ENCODE measurements at regions of chr16 and their contacts with region 1.

Region 1: GRCh38 chr16:85258629-85259028 is 146.4 kb upstream of the CIBAR2 start:
- DNase-seq: no peak
- H3K4me3 Mint-ChIP-seq: no peak overlapping the region
- H3K27ac Mint-ChIP-seq: no peak overlapping the region
- H3K4me1 Mint-ChIP-seq: no peaks in the 10 kb centered on the region
- H3K27me3 Mint-ChIP-seq: no peaks in the 10 kb centered on the region
- CTCF ChIP-seq: no peak

Region 2: GRCh38 chr16:85245307-85246172 is 13.1 kb before region 1 on chr16:
- CTCF ChIA-PET with region 1: interaction called, 15 read pairs
- POLR2A ChIA-PET with region 1: no interaction called
- intact Hi-C with region 1: no loop called
- DNase-seq: peak; percentile 62
- H3K4me3 Mint-ChIP-seq: no peak overlapping the region
- H3K27ac Mint-ChIP-seq: no peak overlapping the region
- H3K4me1 Mint-ChIP-seq: peaks cover 11% of the 10 kb centered on the region
- H3K27me3 Mint-ChIP-seq: peaks cover 12% of the 10 kb centered on the region
- CTCF ChIP-seq: peak; percentile 71

Region 3: DNA sequence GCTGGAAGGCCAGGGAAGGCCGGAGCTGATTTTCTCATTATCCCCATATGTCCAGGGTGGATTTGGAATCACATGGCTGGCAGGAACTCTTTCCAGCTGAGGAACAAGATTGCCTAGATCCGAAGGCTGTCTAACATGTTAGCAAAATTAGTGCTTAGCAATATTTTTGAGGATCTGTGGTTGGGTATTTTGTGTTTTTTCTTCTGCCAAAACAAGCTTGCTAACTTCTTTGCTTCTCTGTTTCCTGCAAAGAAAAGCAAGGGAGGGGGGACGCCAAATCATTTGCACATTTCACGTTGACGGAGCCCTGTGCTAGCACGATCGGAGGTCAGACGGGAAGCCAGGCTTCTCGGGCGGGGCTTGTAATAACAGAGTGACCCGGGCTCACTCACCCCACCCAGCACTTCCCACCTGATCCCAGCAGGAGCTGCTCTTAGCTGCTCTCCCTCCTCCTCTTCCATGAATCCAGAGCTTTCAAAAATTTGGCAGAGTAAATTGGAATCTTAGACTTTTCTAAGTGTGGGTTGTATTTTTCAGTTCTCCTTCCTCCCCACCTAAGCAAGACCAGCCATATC is 1218.4 kb after region 1 on chr16:
- CTCF ChIA-PET with region 1: no interaction called
- POLR2A ChIA-PET with region 1: no interaction called
- intact Hi-C with region 1: no loop called
- DNase-seq: no peak
- H3K4me3 Mint-ChIP-seq: no peak overlapping the region
- H3K27ac Mint-ChIP-seq: no peak overlapping the region
- H3K4me1 Mint-ChIP-seq: no peaks in the 10 kb centered on the region
- H3K27me3 Mint-ChIP-seq: peaks cover 82% of the 10 kb centered on the region
- CTCF ChIP-seq: no peak